ENCODE measurements at regions of chr7 and their contacts with region 1.

Region 1: DNA sequence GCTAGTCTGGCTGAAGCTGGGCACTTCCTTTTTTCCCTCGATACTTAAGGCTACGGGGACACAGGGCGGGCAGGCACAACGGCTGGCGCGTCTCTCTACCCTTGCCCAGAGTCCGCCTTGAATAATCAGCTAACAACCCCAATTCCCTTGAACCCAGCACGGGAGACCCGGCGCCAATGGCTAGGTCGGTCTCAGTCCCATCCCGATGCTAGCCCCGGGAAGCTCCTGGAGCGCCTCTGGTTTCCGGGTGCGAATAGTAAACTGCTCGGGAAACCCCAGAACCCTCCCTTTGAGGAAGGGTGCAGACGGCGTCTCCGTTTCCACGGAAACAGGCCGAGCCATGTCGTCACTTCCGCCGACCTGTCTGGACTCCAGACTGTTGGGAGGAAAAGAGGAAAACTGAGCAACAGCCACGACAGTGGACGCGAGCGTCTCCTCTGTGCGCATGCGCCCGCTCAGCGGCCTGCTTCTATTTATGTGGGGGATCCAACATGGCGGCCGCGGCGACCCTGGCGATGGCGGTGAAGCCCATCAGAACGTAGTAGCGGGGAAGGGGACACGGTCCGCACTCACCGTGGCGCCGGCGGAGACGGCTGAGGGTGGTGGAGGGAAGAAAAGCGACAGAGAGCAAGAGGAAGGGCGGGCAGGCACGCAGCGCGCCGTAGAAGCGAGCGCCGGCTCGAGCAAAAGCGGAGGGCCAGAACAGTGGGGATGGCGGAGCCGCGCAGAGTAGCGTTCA is at the start of gene UBN2:
- DNase-seq: peak; percentile 99
- H3K4me3 ChIP-seq: peak within 1 kb of the TSS; percentile 35 to 72 (median 67)
- H3K27ac ChIP-seq: peak within 1 kb of the TSS; percentile 67
- H3K4me1 ChIP-seq: peaks cover 16% of the 10 kb centered on the region
- H3K27me3 ChIP-seq: no peaks in the 10 kb centered on the region
- CTCF ChIP-seq: no peak
- POLR2A ChIP-seq: peak; percentile 83
- total RNA-seq, gene UBN2: 11.8 and 14.2 TPM in 2 replicates

Region 2: DNA sequence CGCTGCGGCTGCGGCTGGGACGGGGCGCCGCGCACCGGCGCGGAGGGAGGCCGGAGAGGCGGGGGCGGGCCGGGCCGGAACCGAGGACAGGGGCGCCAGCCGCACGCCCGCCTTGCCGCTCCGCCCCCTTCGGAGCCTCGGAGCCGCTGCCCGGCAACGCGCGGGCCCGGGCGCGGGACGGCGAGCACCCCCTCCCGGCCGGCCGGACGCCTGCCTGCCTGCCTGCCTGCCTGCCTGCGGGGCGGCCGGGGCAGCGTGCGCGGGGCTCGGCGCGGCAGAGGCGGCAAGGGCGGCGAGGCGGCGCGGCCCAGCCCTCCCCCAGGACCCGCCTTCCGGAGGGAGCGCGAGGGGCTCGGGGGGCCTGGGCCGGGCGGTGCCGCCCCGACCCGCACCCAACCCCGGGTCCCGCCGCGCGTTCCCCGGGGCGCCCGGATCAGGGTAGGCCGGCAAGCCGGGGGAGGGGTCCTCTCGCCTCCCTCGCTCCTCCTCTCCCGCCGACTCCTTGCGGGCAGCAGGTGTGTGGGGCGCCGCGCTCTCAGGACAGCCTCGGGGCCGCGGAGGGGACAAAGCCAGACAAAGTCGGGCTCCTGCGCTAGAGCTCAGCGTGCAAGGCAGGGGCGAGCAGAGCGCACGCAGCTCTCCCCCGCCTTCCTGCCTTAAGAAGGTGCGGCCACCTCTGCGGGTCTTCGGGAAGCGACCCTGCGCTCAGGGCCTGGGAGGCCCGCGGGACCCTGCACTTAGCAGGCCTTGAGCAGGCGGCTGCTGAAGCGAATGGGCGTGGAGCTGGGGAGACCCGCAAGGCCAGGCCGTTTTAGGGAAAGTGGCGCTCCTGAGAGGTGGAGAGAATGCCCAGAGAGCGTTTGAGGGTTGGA is 249.4 kb before region 1 on chr7 and contains the start of gene KIAA1549:
- CTCF ChIA-PET with region 1: no interaction called
- POLR2A ChIA-PET with region 1: no interaction called
- dilution Hi-C with region 1: no loop called
- intact Hi-C with region 1: loop called (anchors 1 kb)
- DNase-seq: peak; percentile 62
- H3K4me3 ChIP-seq: peak within 1 kb of the TSS; percentile 59 to 93 (median 72)
- H3K27ac ChIP-seq: no peak within 1 kb of the TSS
- H3K4me1 ChIP-seq: peaks cover 24% of the 10 kb centered on the region
- H3K27me3 ChIP-seq: no peaks in the 10 kb centered on the region
- CTCF ChIP-seq: peak; percentile 6 to 21
- POLR2A ChIP-seq: no peak
- total RNA-seq, gene KIAA1549: 10.9 and 12.4 TPM in 2 replicates

Region 3: DNA sequence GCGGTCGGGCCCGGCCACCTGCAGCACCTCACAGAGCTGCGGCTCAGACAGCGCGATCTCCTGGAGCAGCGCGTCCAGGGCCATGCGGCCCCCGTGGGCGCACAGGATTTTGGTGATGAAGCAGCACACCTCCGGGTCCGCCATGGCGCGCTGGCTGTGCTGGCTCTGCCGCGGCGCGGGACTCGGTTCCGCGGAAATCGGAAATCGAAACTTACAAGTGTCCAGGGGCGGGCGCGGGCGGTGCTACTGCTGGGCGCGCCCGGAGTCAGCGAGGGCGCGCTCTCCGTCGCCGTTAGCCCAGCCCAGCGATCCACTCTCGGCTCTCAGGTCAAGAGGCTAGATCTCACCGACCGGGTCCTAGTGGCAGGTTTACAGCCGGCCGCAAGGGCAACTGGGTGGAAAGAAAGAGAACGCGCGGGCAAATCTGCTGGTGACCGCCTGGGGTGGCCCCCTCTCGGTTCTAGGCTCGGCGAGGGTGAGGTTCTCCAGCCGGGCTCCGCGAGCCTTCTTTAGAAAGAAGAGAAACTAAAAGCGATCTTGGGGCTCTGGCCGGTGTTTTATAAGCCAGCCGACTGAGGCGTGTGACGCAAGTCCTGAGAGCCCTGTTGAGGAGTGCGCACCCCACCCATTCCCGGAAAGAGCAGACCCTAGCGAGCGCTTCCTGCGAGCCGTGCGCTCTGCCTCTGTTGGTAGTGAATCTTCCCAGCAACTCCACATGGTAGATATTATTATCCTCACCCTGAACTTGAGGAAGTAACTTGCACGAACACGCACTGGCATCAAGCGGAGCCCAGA is 121.6 kb before region 1 on chr7 and contains the start of gene ZC3HAV1:
- CTCF ChIA-PET with region 1: no interaction called
- POLR2A ChIA-PET with region 1: no interaction called
- dilution Hi-C with region 1: no loop called
- intact Hi-C with region 1: loop called (anchors 1 kb)
- DNase-seq: peak; percentile 79
- H3K4me3 ChIP-seq: peak within 1 kb of the TSS; percentile 69 to 87 (median 71)
- H3K27ac ChIP-seq: peak within 1 kb of the TSS; percentile 64
- H3K4me1 ChIP-seq: peaks cover 13% of the 10 kb centered on the region
- H3K27me3 ChIP-seq: no peaks in the 10 kb centered on the region
- CTCF ChIP-seq: no peak
- POLR2A ChIP-seq: peak; percentile 92
- total RNA-seq, gene ZC3HAV1: 36.8 and 37.7 TPM in 2 replicates

Region 4: GRCh38 chr7:139133335-139134139 is 97.4 kb before region 1 on chr7:
- CTCF ChIA-PET with region 1: interaction called, 7 read pairs
- POLR2A ChIA-PET with region 1: no interaction called
- dilution Hi-C with region 1: no loop called
- intact Hi-C with region 1: loop called (anchors 1 kb)
- DNase-seq: peak; percentile 94
- H3K4me3 ChIP-seq: peak overlapping the region; percentile 54 to 87 (median 66)
- H3K27ac ChIP-seq: peak overlapping the region; percentile 41
- H3K4me1 ChIP-seq: peaks cover 4% of the 10 kb centered on the region
- H3K27me3 ChIP-seq: peaks cover 0 to under 1% of the 10 kb centered on the region in 2 experiments
- CTCF ChIP-seq: no peak
- POLR2A ChIP-seq: peak; percentile 66

Region 5: DNA sequence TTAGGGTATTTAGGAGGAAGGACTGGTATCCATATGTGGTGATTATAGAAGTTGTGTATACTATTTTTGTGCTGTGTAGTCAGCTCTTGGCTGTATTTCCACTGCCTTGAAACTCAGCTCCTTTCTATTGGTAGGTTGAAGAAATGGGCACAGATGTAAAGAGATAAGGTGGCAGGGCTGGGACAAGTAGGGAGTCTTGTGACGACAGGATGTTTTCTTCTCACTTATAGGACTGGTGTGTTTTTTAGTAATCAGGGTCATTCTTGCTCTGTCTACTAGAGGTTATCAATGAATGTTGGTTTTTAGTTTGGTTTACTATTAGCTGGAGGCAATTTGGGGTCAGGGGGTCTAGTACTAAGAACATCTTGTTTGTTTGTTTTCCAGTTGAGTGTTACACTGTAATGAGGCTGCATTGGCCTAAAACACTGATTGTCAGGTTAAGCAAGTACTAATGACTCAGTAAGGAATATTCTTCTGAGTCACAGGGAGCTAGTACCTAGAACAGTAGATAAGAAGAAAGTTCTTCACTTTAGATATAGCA is 11.9 kb after region 1 on chr7:
- CTCF ChIA-PET with region 1: interaction called, 14 read pairs
- POLR2A ChIA-PET with region 1: no interaction called
- dilution Hi-C with region 1: no loop called
- intact Hi-C with region 1: no loop called
- DNase-seq: peak; percentile 27
- H3K4me3 ChIP-seq: no peak overlapping the region
- H3K27ac ChIP-seq: no peak overlapping the region
- H3K4me1 ChIP-seq: peaks cover 11% of the 10 kb centered on the region
- H3K27me3 ChIP-seq: no peaks in the 10 kb centered on the region
- CTCF ChIP-seq: no peak
- POLR2A ChIP-seq: no peak

Region 6: DNA sequence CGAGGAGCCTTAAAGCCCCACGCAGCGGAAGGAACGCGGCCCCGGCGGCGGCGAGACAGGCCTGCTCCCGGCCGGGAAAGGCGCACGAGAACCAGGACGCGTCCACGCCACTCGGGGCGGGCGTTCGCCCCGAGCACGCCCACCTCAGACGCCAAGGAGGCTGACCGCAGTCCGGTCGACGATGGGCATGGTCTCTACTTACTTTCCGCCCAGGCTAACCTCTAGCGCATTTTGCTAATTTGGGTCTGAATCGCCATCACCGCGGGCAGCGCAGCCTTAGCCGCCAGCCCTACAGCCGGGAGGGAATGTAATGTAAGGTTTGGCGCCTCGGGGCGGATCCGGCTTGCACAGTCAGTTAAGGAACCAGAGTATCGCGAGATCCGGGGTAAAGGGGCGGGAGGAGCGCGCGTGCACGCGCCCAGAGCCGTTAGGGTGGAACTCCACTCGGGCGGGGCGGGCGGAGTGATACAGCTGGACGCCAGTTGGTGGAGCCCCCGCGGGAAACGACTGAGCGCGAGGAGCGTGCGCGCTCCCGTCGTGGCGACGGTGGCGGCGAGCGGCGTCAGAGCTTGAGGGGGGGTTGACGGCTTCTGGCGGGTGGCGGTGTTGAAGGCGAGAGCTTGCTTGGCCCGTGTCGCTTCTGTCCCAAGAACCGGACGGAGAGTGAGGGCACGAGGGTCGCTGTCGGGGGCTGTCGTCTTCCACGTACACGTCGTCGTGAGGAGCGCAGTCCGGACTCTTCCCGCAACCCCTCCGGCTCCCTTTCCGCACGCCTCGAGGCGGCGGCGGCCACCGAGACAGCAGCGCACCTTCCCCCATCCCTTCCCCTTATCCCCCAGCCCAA is 128.6 kb after region 1 on chr7 and contains the start of gene LUC7L2:
- CTCF ChIA-PET with region 1: no interaction called
- POLR2A ChIA-PET with region 1: no interaction called
- dilution Hi-C with region 1: no loop called
- intact Hi-C with region 1: loop called (anchors 2 kb)
- DNase-seq: peak; percentile 99
- H3K4me3 ChIP-seq: peak within 1 kb of the TSS; percentile 82 to 97 (median 95)
- H3K27ac ChIP-seq: peak within 1 kb of the TSS; percentile 98
- H3K4me1 ChIP-seq: peaks cover 21% of the 10 kb centered on the region
- H3K27me3 ChIP-seq: no peaks in the 10 kb centered on the region
- CTCF ChIP-seq: no peak
- POLR2A ChIP-seq: peak; percentile 98
- total RNA-seq, gene LUC7L2: 85.8 and 87.6 TPM in 2 replicates

Region 7: GRCh38 chr7:139582671-139583155 is 351.8 kb after region 1 on chr7:
- CTCF ChIA-PET with region 1: no interaction called
- POLR2A ChIA-PET with region 1: no interaction called
- dilution Hi-C with region 1: no loop called
- intact Hi-C with region 1: no loop called
- DNase-seq: no peak
- H3K4me3 ChIP-seq: no peak overlapping the region
- H3K27ac ChIP-seq: no peak overlapping the region
- H3K4me1 ChIP-seq: no peaks in the 10 kb centered on the region
- H3K27me3 ChIP-seq: no peaks in the 10 kb centered on the region
- CTCF ChIP-seq: no peak
- POLR2A ChIP-seq: no peak